OCI-LY7 (cell line): ENCODE measurements at regions of chr2 and their contacts with region 1.

Region 1: DNA sequence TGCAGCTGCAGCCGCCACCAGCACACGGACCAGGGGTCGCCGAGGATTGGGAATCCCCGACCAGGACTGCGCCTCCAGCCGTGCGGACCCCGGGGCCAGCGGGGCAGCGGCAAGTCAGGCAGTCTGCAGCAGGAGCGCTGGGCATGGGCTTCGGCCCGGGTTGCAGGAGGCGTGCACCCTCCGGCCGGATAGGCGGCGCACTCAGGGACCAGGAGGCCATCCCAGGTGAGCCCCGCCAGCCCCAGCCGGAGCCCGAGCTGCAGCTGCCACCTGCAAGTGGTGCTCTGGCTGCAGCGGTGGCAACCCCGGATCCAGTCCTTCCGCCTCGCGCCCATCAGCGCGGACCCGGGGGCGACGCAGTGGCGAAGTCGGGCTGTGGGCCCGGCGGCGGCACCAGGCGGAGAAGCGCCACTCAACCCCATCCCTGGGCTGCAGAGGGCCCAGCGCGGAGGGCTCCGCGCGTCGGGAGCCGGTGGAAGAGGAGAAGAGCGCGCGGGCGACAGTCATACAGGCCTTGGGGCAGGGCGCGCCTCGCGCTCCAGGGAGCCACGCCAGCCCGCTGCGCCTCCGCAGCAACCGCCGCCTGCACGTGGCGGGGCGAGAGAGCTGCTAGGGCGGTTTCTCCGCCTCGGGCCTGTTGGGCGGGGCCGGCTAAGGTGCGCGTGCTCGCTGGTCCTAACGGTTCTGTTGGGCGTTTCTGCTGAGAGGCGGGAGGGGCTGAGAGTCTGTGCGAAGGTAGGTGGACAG is 73.9 kb downstream of the RPIA start:
- DNase-seq: peak; percentile 94
- H3K4me3 ChIP-seq: peak overlapping the region; percentile 78
- H3K27ac ChIP-seq: peak overlapping the region; percentile 86
- H3K4me1 ChIP-seq: peaks cover 33% of the 10 kb centered on the region
- CTCF ChIP-seq: 0 out of 2 replicates have a peak, but pooled peaks have one; percentile 15

Region 2: DNA sequence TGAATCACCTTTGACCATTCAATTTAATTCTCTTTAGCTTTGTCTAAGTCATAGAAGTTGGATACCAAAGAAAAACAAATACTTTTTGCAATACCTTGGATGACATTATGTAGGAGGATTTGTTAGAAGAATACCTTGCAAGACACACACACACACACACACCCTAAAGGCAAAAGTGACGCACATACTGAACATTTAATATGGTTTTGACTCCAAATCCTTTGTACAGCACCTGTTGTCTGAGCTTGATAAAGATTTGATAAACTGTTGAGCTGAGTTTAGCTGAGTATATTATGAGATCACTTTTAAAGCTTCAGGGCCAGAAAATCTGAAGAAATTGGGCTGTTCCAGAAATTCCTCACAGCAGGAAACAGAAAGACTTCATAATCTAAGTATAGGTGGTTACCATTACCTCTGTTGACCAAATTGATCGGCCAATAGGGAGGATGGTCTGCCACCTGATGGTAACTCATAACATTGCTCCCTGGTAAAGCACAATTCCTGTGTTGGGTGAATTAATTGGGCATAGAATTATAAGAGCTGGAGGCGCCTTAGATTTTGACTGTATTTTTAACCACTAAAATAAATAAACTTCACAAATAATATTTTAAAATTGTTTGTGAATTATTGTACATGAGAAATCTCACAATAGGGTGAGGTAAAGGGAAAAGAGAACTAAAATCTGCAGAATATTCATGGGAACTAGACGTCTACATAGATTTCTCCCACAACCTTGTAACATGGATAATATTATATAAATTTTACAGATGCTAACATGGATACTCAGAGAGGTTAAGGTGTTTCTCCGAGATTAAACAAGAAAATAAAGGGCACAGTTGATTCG is 95.7 kb before region 1 on chr2:
- CTCF ChIA-PET with region 1: no interaction called
- POLR2A ChIA-PET with region 1: no interaction called
- intact Hi-C with region 1: no loop called
- DNase-seq: peak; percentile 74
- H3K4me3 ChIP-seq: no peak overlapping the region
- H3K27ac ChIP-seq: no peak overlapping the region
- H3K4me1 ChIP-seq: no peaks in the 10 kb centered on the region
- CTCF ChIP-seq: peak; percentile 98

Region 3: DNA sequence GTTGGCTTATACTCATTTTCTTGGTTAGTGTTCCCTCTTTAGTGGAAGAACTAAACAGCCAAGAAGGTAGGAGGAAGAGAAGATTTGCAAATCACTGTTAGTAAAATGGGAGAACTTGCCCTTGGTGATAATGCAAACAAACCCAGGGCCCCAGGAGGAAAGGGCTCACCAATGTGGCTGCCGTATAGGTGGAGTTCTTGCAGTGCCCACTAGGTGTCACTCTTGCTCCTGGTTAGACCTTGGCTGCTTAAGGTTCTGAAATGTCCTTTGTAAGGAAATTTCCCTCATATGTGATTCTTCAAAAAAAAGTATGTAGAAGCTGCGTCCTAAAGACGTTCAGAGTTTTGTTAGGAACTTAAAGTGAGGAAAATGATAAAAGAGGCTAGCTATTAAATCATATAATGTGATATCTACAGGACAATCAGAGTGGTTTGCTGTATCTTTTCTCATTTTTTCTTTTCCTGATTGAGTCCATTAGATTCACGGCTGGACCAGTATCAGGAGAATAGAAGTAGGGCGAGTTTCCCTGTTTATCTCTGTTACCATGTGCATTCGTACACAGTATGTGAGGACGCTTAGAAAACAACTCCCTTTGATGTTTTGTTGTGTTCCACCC is 25.2 kb before region 1 on chr2:
- CTCF ChIA-PET with region 1: no interaction called
- POLR2A ChIA-PET with region 1: interaction called, 3 read pairs
- intact Hi-C with region 1: loop called (anchors 2 kb)
- DNase-seq: peak; percentile 88
- H3K4me3 ChIP-seq: peak overlapping the region; percentile 18
- H3K27ac ChIP-seq: peak overlapping the region; percentile 69
- H3K4me1 ChIP-seq: peaks cover 22% of the 10 kb centered on the region
- CTCF ChIP-seq: peak; percentile 97